GM18951 (cell line): ENCODE measurements at regions of chr17 and their contacts with region 1.

Region 1: DNA sequence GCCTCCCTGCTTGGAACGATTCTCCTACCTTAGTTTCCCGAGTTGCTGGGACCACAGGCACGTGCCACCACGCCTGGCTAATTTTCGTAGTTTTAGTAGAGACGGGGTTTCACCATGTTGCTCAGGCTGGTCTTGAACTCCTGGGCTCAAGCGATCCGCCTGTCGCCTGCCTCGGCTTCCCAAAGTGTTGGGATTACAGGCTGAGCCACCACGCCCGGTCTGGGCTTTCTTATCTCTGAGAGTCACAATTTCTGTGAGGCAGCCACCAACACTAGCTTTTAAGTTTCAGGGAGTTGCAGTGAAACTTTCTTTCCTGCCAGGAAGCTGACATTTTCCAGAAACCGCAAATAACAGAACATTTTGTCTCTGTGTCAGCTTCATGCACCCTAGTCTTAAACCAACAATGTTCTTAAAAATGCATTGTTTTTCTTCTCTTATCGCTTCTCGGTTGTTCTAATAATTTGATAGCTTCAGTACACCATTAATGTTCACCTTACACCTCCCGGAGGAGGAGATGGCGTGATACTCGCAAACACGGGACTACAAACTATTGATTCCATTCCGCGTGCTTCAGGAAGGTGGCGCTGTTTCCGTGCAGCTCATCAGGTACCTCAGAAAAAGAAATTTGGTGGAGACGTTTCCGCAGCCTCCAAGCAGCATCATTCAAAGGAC is 7.4 kb upstream of the DHRS7B start:
- POLR2A ChIP-seq: no peak

Region 2: GRCh38 chr17:21511363-21512198 is 392.2 kb after region 1 on chr17:
- in situ Hi-C with region 1: loop called (anchors 25 kb)
- POLR2A ChIP-seq: no peak